ENCODE measurements at regions of chr10 and their contacts with region 1.

Region 1: DNA sequence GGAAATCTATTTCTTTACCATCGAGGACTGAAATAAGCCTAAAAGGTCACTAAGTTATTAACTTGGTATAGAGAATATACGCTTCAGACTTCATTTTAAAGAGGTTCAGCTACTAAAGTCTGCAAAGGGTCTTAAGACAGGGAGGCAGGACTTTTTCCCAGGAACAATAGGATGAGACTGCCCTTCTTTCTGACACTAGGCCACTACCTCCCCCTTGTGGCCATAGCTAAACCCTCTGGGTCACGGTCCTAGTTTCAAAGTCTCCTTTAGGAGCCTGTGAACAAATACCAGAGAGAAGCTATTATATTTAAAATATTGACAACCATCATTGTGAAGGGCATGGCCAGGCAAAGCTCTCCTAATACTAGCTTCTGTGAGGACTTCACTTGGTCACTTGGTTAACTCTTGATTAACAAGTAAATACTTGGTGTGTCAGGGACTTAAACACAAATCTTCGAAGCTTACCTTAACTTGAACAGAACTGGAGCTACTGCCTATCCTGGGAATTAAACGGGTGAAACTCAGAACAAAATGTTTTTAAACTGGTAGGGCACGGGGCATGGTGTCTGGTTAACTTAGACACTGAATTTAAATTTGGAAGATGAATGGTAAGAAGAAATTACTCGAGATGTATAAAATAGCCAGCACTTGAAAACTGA is 75.6 kb downstream of the CCDC6 start:
- DNase-seq: peak; percentile 55 to 75
- H3K4me3 ChIP-seq: no peak overlapping the region
- H3K4me1 ChIP-seq: peaks cover 13% of the 10 kb centered on the region; the same call in 1 of the 2 replicates
- H3K27me3 ChIP-seq: no peaks in the 10 kb centered on the region

Region 2: GRCh38 chr10:60032723-60033122 is 202.0 kb after region 1 on chr10:
- in situ Hi-C with region 1: loop called (anchors 25 kb)
- DNase-seq: peak; percentile 43 to 65
- H3K4me3 ChIP-seq: no peak overlapping the region
- H3K4me1 ChIP-seq: no peaks in the 10 kb centered on the region
- H3K27me3 ChIP-seq: no peaks in the 10 kb centered on the region